ENCODE measurements at regions of chr2 and their contacts with region 1.

Region 1: GRCh38 chr2:17309741-17310339 is 208.4 kb downstream of the RAD51AP2 start:
- DNase-seq: peak; percentile 77 to 78
- H3K4me3 ChIP-seq: no peak overlapping the region
- H3K4me3 Mint-ChIP-seq: no peak overlapping the region
- H3K27ac Mint-ChIP-seq: no peak overlapping the region
- H3K4me1 ChIP-seq: no peaks in the 10 kb centered on the region
- H3K4me1 Mint-ChIP-seq: no peaks in the 10 kb centered on the region
- H3K27me3 ChIP-seq: no peaks in the 10 kb centered on the region
- H3K27me3 Mint-ChIP-seq: peaks cover 10% of the 10 kb centered on the region
- CTCF ChIP-seq: peak; percentile 79 to 82

Region 2: GRCh38 chr2:17104454-17104853 is 205.4 kb before region 1 on chr2:
- CTCF ChIA-PET with region 1: no interaction called
- POLR2A ChIA-PET with region 1: no interaction called
- intact Hi-C with region 1: no loop called
- DNase-seq: no peak
- H3K4me3 ChIP-seq: no peak overlapping the region
- H3K4me3 Mint-ChIP-seq: no peak overlapping the region
- H3K27ac Mint-ChIP-seq: no peak overlapping the region
- H3K4me1 ChIP-seq: no peaks in the 10 kb centered on the region
- H3K4me1 Mint-ChIP-seq: no peaks in the 10 kb centered on the region
- H3K27me3 ChIP-seq: no peaks in the 10 kb centered on the region; the same call in 1 of the 2 replicates
- H3K27me3 Mint-ChIP-seq: peaks cover 6% of the 10 kb centered on the region
- CTCF ChIP-seq: no peak

Region 3: DNA sequence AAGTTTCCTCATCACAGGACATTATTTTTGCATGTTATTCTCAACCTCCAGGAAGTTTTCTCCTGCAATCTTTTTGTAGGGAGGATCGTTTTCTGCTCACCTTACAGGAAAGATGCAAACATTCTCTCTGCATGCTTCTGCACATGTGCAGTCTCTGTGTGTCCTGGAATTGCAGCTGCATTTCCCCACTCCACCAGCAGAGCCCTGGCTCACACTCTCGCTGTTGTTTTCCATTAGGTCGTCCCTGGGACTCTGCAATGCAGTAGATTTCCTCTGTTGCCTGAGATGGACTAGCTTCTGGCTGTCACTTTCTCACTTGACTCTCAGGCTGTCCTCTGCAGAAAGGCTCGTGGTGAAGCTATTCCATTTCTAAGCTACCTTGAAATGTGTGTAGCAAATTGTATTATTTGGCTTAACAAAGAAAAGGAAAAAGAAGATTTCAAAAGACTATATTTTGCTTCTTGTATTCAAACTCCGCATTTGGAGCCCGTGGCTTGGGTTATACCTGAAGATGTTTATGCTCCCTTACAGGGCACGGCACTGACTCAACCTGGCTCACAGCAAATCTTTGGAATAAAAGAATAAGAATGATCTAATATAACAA is 138.3 kb before region 1 on chr2:
- CTCF ChIA-PET with region 1: interaction called, 12 read pairs
- POLR2A ChIA-PET with region 1: no interaction called
- intact Hi-C with region 1: loop called (anchors 1 kb)
- DNase-seq: peak; percentile 58 to 64
- H3K4me3 ChIP-seq: no peak overlapping the region
- H3K4me3 Mint-ChIP-seq: no peak overlapping the region
- H3K27ac Mint-ChIP-seq: no peak overlapping the region
- H3K4me1 ChIP-seq: no peaks in the 10 kb centered on the region
- H3K4me1 Mint-ChIP-seq: no peaks in the 10 kb centered on the region
- H3K27me3 ChIP-seq: no peaks in the 10 kb centered on the region
- H3K27me3 Mint-ChIP-seq: peaks cover 12% of the 10 kb centered on the region
- CTCF ChIP-seq: peak; percentile 67 to 73

Region 4: GRCh38 chr2:17573085-17573803 is 263.4 kb after region 1 on chr2:
- CTCF ChIA-PET with region 1: no interaction called
- POLR2A ChIA-PET with region 1: no interaction called
- intact Hi-C with region 1: loop called (anchors 1 kb)
- DNase-seq: no peak
- H3K4me3 ChIP-seq: no peak overlapping the region
- H3K4me3 Mint-ChIP-seq: no peak overlapping the region
- H3K27ac Mint-ChIP-seq: no peak overlapping the region
- H3K4me1 ChIP-seq: no peaks in the 10 kb centered on the region
- H3K4me1 Mint-ChIP-seq: no peaks in the 10 kb centered on the region
- H3K27me3 ChIP-seq: no peaks in the 10 kb centered on the region
- H3K27me3 Mint-ChIP-seq: peaks cover 12% of the 10 kb centered on the region
- CTCF ChIP-seq: no peak

Region 5: DNA sequence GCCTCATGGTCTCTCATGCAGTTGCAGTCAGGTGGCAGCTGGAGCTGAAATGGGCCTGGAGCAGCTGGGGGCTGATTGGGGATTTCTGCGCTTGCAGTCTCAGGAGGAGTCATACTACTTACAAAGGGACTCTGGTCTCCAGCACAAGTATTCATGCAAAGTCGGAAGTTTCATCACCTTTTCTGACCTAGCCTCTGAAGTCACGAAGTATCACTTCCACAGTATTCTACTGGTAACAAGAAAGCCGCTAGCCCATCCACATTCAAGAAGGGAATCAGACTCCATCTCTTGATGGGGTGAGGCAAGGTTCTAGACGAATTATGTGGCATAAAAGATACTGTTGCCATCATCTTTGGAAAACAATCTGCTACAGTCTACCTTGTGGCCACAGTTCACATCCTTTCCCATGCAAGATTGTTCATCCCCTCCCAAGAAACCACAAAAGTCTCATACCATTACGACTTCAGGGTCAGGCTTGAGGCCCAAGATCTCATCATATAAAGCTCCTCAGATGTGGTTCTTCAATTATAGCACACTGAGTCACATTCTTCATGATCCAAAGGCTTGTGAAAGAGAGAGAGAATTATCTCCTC is 348.5 kb after region 1 on chr2:
- CTCF ChIA-PET with region 1: no interaction called
- POLR2A ChIA-PET with region 1: no interaction called
- intact Hi-C with region 1: no loop called
- DNase-seq: no peak
- H3K4me3 ChIP-seq: no peak overlapping the region
- H3K4me3 Mint-ChIP-seq: no peak overlapping the region
- H3K27ac Mint-ChIP-seq: no peak overlapping the region
- H3K4me1 ChIP-seq: no peaks in the 10 kb centered on the region
- H3K4me1 Mint-ChIP-seq: no peaks in the 10 kb centered on the region
- H3K27me3 ChIP-seq: no peaks in the 10 kb centered on the region
- H3K27me3 Mint-ChIP-seq: no peaks in the 10 kb centered on the region
- CTCF ChIP-seq: no peak

Measured in Caco-2 (cell line).